Posterior vena cava (tissue), 2 donors: ENCODE measurements at regions of chr3 and their contacts with region 1.

Region 1: DNA sequence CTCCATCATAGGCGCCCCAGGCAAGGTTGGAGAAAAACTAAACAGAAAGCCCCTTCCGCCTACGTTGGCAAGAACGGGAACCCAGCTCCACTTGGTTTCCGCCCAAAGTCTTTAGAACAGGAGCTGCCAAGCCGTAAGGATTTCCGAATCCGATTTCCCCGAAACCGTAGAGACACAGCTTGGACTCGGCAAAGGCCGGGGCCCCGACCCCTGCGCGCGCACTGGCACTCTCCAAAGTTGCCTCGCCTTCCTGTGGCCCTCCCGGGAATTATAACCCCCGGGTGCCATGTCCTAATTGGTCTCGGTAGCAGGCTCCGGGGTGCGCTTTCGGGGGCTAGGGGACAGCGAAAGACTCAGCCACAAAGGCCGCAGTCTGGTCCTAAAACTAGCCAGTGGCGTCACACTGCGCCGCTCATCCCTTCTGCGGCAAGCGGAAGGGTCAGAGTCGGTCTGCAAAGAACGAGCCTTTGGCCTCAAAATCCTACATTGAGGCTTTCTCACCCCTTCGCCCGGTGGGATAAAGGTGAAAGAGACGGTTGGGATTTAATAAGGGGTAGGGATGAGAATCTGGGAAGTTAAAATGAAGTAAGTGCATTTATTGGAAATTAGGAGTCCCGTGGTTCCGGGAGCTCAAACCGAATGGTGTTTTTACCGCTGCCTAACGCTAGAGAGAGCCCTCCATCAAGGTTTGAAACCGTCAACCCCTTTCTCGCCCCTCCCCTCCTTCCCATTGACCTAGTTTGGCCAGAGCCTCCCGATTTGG is 6.8 kb downstream of the BCL6 start:
- DNase-seq: peak; percentile 94

Region 2: DNA sequence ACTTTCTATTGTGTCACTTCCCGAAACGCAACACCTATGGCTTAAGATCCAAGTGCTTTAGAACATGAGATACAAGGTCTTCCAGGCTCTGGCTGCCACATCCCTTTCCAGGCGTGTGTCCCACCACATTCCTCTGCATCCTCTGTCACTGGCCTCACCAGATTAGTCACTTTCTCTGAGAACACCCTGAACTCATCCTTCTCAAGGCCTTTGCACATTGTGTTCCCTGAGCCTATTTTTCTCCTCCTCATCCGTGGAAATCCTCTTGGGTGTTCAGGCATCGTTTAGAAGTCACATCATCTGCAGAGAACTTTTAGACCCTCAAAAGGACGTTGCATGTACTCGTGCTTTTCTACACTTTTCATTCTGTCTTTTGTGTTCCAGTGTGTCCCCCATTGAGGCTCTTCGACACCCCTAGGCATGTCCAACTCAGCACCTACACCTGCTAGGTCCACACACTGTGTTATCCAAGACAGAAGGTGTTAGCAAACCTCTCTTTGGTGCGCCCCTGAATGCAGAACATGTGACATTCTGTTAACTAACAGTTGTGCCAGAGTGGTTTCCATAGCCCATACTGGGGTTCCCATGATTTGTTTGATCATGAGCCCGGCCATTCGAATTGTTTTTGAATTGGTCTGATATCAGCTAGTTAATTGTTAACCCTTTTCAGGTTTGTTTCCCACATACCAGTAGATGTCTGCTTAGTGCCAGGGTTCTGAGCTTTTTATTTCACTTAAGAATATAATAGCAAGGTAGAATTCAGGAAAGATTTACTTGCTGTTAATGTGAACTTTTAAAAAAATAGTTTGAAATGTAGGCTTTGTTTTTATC is 482.7 kb after region 1 on chr3:
- intact Hi-C with region 1: loop called in 1 of 2 experiments (anchors 5 kb)
- DNase-seq: peak; percentile 87

Region 3: DNA sequence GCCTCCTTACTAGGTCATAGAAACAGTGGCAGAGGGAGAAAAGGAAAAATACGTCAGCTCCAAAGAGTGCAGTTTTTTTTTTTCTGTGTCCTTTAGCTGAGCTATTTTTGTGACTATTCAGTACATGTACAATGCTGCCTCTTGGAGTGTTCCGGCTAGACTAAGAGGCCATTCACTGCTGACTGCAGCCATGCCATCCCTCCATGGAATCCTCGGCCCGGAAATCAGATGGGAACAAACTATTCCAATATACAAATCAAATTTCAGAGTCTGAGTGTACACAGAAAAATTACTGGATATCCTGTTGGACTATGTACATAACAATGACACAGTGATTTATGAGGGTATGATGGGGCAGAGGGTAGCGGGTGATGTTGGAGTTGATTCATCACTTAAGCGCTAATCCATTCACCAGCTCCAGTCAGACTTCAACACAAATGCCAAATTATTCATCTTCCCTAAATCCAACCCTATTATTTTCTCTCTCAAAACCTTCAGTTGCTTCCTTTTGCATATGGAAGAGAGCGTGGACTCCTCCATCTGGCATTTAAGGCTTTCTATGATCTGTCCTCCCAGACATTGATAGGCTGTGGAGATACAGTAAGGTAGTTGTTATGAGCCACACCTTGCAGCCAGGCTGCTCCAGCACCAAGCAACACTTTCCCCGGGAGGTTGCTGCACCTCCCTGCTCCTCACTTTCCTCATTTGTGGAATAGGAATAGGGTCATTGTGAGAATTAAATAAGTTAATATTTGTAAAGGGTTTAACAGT is 524.6 kb after region 1 on chr3:
- intact Hi-C with region 1: loop called in 1 of 2 experiments (anchors 5 kb)
- DNase-seq: no peak

Region 4: GRCh38 chr3:188584162-188584529 is 845.6 kb after region 1 on chr3:
- intact Hi-C with region 1: loop called in 1 of 2 experiments (anchors 5 kb)
- DNase-seq: no peak

Region 5: GRCh38 chr3:188947401-188948280 is 1209.1 kb after region 1 on chr3:
- intact Hi-C with region 1: loop called (anchors 2 to 10 kb)
- DNase-seq: peak; percentile 96